BJ (cell line): ENCODE measurements at regions of chr17 and their contacts with region 1.

Region 1: DNA sequence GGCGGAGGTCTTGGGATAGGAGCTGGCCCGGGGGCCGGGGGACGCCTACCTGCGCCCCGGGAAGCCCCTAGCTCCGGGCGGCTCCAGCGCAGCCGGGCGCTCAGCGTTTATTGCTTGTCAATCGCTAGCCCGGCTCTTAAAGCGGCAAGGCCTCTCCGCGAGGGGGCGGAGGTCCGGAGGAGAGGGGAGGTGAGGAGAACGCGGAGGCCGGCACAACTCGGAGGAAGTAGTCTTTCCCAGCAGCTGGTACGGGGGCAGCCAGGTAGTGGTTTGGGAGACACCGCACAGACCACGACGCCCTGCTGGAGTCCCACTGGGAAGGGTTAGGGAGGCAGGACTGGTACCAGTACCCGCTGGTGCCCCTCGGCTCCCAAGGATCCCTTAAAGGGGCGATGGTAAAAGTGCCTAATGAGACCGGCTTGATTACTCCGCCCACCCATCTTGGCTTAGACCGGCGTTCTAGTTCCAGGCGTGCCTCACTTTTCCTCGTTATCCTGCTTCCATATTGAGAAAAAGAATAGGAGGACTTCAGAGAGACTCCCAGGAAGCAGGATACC is at the start of gene MPP2:
- DNase-seq: no peak
- H3K4me3 ChIP-seq: peak within 1 kb of the TSS; percentile 51
- H3K27me3 ChIP-seq: peaks cover 4% of the 10 kb centered on the region
- CTCF ChIP-seq: peak; percentile 41; the same call in 1 of the 2 replicates
- polyA plus RNA-seq, gene MPP2: 3.1 and 5.3 TPM in 2 replicates

Region 2: GRCh38 chr17:43891851-43892646 is 15.5 kb before region 1 on chr17:
- CTCF ChIA-PET with region 1: interaction called, 39 read pairs
- POLR2A ChIA-PET with region 1: no interaction called
- DNase-seq: no peak
- H3K4me3 ChIP-seq: no peak overlapping the region
- H3K27me3 ChIP-seq: peaks cover 4% of the 10 kb centered on the region
- CTCF ChIP-seq: no peak

Region 3: GRCh38 chr17:43920500-43921095 is 13.1 kb after region 1 on chr17:
- CTCF ChIA-PET with region 1: interaction called, 48 read pairs
- POLR2A ChIA-PET with region 1: no interaction called
- DNase-seq: no peak
- H3K4me3 ChIP-seq: no peak overlapping the region
- H3K27me3 ChIP-seq: peaks cover 18% of the 10 kb centered on the region
- CTCF ChIP-seq: no peak

Region 4: GRCh38 chr17:43927060-43927864 is 19.8 kb after region 1 on chr17:
- CTCF ChIA-PET with region 1: interaction called, 48 read pairs
- POLR2A ChIA-PET with region 1: no interaction called
- DNase-seq: no peak
- H3K4me3 ChIP-seq: no peak overlapping the region
- H3K27me3 ChIP-seq: peaks cover 27% of the 10 kb centered on the region
- CTCF ChIP-seq: no peak

Region 5: DNA sequence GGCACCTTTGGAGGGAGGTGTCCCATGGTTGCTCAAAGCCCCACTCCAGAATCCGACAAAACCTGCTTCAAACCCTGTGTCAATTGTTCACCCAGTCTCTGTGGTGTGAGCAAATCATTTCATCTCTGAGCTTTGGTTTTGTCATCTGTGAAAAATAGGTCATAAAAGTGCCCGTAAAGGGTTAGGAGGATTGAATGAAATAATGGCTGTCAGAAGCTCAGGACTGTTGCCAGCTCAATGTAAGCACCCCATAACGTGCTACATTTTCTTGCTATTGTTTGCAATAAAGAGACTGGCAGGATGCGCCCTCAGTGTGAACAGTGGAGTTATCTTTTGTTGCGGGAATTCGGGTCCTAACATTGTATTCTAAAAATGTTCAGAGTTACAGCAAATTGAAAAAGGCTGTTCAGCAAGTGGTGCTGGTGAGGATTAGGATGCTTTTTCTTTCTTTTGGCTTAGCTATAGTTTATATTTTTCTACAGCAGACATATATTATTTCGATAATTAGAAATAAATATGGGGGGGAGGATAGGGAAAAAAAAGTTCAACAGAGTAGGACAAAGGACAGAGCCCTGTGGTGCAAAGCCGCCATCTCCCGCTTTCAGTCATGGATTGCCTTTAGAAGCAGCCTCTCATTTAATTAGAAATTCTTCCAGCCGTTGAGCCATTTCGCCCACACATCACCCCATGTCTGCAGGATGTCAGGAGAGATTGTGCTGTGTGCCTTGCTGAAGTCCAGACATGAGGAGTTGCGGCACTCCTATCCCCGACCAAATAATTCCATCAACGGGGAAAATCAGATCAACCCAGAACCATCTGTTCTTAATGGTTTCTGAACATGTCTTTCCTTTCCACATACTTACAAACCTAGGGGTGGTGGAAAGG is 67.1 kb after region 1 on chr17:
- CTCF ChIA-PET with region 1: no interaction called
- POLR2A ChIA-PET with region 1: no interaction called
- DNase-seq: no peak
- H3K4me3 ChIP-seq: no peak overlapping the region
- H3K27me3 ChIP-seq: peaks cover 20% of the 10 kb centered on the region
- CTCF ChIP-seq: no peak